ENCODE measurements at regions of chr19 and their contacts with region 1.

Region 1: GRCh38 chr19:1241417-1242095 is at the start of gene ATP5F1D:
- DNase-seq: no peak
- H3K4me3 ChIP-seq: peak within 1 kb of the TSS; percentile 72
- CTCF ChIP-seq: no peak

Region 2: GRCh38 chr19:925526-926322 is 315.8 kb before region 1 on chr19 and contains the start of gene ARID3A:
- CTCF ChIA-PET with region 1: interaction called, 16 read pairs
- POLR2A ChIA-PET with region 1: no interaction called
- DNase-seq: no peak
- H3K4me3 ChIP-seq: peak within 1 kb of the TSS; percentile 85
- CTCF ChIP-seq: no peak

Region 3: DNA sequence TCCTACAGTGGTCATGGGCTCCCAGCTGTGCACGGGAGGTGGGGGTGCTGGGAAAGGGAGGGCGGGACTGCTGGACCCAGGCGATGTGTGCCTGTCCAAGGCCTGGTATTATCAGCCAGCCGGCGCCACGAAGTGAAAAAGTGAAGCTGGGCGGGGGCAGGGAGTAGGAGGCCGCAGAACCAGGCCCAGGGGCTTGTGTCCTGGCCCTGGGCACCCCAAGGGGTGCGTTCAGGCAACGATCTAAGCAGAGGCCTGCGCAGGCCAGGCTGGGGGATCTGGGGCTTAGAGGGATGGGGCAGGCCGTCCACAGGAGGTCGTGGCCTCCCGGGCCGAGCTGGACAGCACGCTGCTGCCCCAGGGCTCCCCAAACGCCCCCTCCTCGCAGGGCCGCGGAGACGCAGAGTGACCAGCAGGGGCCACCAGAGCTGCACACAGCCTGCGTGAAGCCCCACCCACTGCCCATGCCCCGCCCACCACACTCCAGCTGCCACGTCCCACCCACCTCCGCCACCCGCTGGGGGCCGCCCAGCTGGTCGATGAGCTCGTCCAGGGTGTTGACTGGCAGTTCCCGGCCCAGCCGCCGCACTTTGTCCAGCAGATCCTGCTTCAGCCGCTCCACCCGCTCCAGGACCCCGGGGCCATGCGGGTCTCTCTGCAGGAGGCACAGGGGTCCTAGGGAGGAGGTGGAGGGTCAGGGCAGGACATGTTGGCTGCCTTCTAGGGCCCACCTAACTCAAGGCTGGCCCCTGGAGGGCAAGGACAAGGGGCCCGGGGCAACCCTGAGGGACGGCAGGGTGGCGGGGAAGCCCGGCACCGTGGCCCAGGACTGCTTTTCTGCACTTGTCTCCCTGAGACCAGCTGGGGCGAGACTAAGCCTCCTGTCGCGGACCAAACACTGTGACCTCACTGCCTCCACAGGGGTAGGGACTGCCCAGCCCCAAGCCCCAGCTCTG is 128.2 kb before region 1 on chr19:
- CTCF ChIA-PET with region 1: interaction called, 16 read pairs
- POLR2A ChIA-PET with region 1: interaction called, 3 read pairs
- DNase-seq: peak; percentile 47
- H3K4me3 ChIP-seq: no peak overlapping the region
- CTCF ChIP-seq: peak; percentile 95

Region 4: DNA sequence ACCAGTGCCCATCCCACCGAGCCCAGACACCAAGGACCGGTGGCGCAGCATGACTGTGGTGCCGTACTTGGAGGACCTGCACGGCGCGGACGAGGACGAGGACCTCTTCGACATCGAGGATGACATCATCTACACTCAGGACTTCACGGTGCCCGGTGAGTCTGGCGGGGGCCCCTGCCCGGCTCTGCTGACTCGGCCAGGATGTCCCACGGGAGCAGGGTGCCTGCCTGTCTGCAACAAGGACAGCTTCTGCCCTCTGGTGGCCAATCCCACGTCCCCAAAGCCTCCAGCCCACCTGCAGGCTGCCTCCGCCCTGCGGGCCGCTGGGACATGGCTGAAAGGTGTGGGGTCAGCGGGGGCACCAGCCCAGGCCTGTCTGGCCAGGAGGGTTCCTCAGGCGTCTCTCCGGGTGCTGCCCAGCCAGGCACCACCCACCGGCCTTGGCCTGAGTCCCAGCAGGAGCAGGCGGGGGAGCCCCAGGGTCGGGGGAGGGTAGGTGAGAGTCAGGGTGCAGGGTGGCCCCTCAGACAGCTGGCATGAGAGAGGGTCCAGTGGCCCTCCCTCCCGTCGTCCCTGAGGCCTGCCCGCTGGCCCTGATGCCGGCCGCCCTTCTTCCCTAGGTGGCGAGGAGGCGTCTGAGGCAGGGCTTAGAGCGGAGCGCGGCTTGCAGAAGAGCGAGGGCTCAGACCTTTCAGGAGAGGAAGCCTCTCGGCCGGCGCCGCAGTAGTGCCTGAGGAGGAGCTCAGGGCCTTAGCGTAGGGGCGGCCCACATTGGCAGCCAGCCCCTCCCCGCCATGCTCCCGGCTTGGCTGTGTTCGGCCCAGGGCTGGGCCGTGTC is 18.3 kb before region 1 on chr19:
- CTCF ChIA-PET with region 1: interaction called, 17 read pairs
- POLR2A ChIA-PET with region 1: no interaction called
- DNase-seq: no peak
- H3K4me3 ChIP-seq: no peak overlapping the region
- CTCF ChIP-seq: peak; percentile 57

Region 5: DNA sequence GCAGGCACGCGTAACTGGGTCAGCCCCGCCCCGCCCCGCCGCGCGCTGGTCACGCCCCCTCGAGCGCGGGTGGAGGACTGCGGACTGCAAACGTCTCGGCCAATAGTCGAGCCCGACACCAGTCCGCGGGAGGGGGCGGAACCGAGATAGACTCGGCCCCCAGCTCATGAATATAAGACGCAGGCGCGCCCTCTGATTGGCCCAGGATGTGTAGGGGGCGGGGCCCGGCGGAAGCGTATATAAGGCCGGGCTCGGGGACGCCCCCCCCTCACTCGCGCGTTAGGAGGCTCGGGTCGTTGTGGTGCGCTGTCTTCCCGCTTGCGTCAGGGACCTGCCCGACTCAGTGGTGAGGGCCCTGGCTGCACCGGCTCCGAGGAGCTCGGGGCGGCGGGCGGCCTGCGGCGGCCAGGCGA is 27.5 kb after region 1 on chr19 and contains the start of gene CIRBP:
- CTCF ChIA-PET with region 1: interaction called, 626 read pairs
- POLR2A ChIA-PET with region 1: interaction called, 96 read pairs
- DNase-seq: peak; percentile 93
- H3K4me3 ChIP-seq: peak within 1 kb of the TSS; percentile 82
- CTCF ChIP-seq: no peak